GM13976 (cell line): ENCODE measurements at regions of chr11 and their contacts with region 1.

Region 1: GRCh38 chr11:109845437-109845836 is 247.8 kb upstream of the ZC3H12C start:
- DNase-seq: no peak
- CTCF ChIP-seq: no peak

Region 2: GRCh38 chr11:109772841-109773400 is 72.5 kb before region 1 on chr11:
- in situ Hi-C with region 1: no loop called
- DNase-seq: no peak
- CTCF ChIP-seq: no peak

Region 3: GRCh38 chr11:109939166-109939810 is 93.9 kb after region 1 on chr11:
- in situ Hi-C with region 1: loop called (anchors 5 kb)
- DNase-seq: no peak
- CTCF ChIP-seq: peak; percentile 60

Region 4: DNA sequence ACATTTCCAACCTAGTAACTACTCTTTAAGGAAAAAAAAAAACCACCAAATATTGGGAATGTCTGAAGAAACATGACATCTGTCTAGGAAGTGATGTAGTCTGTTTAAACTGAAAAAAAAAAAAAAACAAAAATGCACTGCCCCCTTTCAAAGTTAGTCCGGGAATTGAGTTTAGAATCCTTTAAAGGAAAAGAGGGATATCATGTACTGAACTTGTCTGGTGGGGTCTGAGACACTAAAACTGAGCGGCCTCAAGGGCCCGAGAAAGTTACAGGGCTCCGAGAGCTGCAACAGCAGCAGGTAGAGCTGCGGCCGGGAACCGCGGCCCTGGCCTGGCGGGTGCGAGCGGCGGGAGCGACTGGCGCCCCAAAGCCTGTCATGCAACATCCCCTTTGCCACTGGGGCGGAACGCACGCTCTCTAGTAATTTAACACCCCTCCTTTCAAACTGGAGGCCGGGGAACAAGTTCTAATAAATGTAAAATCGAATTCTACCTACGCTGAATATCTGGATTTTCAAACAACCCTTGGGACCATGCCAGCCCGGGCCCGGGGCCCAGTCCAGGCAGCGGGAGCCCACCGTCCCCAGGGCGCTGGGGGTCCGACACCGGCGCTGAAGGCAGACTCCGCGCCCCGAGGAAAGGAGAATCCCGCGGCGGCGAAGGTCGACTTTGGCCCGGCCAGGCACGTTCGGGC is 450.2 kb after region 1 on chr11:
- in situ Hi-C with region 1: no loop called
- DNase-seq: peak; percentile 81
- CTCF ChIP-seq: no peak

Region 5: GRCh38 chr11:110409174-110409573 is 563.7 kb after region 1 on chr11:
- in situ Hi-C with region 1: loop called (anchors 25 kb)
- DNase-seq: no peak
- CTCF ChIP-seq: no peak